PC-9 (cell line): ENCODE measurements at regions of chr7 and their contacts with region 1.

Region 1: GRCh38 chr7:83684894-83685293 is 36.0 kb upstream of the SEMA3E start:
- DNase-seq: peak; percentile 86 to 99
- H3K4me3 ChIP-seq: no peak overlapping the region; the same call in 1 of the 2 replicates
- H3K27ac ChIP-seq: peak overlapping the region; percentile 95
- H3K4me1 ChIP-seq: peaks cover 29% of the 10 kb centered on the region
- H3K27me3 ChIP-seq: no peaks in the 10 kb centered on the region
- CTCF ChIP-seq: no peak

Region 2: DNA sequence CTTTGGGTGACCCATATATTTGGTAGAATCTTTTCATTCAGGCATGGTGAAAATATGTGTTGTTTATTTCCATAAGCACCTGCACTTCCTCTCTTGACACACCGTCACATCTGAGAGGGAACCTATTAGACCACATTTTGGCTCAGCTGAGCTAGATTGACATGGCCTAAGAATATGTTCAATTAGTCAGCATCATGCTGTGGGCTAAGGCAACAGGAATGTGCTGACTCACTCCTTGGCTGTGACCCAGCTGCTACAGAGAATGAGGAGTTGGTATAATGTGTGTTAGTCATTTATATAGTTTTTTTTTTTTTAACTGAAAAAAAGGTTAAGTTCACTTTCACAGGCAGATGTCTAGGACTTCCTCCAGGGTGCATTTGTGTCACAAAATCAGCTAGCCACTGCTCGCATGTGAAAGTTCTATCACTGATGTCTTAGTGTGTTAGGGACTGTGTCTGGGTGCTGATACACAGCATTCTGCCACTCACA is 216.6 kb before region 1 on chr7:
- CTCF ChIA-PET with region 1: no interaction called
- POLR2A ChIA-PET with region 1: no interaction called
- intact Hi-C with region 1: loop called (anchors 1 kb)
- DNase-seq: peak; percentile 95 to 97
- H3K4me3 ChIP-seq: no peak overlapping the region
- H3K27ac ChIP-seq: peak overlapping the region; percentile 68
- H3K4me1 ChIP-seq: peaks cover 19% of the 10 kb centered on the region
- H3K27me3 ChIP-seq: no peaks in the 10 kb centered on the region
- CTCF ChIP-seq: peak; percentile 33; the same call in 1 of the 2 replicates

Region 3: GRCh38 chr7:83524286-83525075 is 160.4 kb before region 1 on chr7:
- CTCF ChIA-PET with region 1: no interaction called
- POLR2A ChIA-PET with region 1: no interaction called
- intact Hi-C with region 1: loop called (anchors 10 kb)
- DNase-seq: peak; percentile 34 to 80
- H3K4me3 ChIP-seq: no peak overlapping the region
- H3K27ac ChIP-seq: no peak overlapping the region
- H3K4me1 ChIP-seq: peaks cover 9% of the 10 kb centered on the region; the same call in 1 of the 2 replicates
- H3K27me3 ChIP-seq: no peaks in the 10 kb centered on the region
- CTCF ChIP-seq: no peak

Region 4: DNA sequence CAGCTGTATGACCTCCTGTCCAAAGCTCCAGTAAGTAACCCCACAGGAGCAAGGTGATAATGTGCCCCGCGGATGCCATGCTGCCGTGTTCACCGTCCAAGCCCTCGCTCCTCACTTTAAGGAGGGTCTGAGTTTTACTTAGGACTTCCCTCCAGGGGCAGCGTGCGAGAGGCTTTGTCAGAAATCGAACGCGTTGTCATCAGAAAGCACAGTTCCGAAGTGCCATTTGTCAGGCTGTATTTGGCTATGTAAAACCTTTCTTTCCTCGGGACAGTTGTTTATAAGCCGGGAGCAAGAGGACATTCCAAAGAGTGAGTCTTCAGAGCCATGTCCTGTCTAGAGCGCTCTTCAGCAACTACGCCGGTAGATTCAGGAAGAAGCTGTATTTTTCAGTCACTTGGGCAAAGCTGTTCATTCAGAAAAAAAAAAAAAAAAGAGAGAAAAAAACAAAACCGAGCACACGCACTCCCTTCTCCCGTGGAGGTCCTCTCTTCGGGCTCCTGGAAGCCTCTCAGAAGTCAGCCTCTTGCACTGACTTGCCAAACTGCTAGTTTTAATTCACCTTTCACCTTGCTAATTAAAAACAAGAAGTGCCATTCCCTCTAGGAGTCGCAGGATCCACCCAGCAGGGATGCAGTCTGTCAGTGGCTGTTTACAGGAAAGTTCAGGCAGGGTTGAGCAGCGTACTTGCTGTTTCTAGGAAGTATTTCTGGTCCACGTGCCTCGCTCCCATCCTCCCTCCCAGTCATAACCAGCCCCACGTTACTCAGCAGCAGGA is 36.2 kb before region 1 on chr7 and contains the start of gene SEMA3E:
- CTCF ChIA-PET with region 1: no interaction called
- POLR2A ChIA-PET with region 1: no interaction called
- intact Hi-C with region 1: no loop called
- DNase-seq: peak; percentile 35 to 62
- H3K4me3 ChIP-seq: peak within 1 kb of the TSS; percentile 71
- H3K27ac ChIP-seq: peak within 1 kb of the TSS; percentile 54
- H3K4me1 ChIP-seq: peaks cover 21% of the 10 kb centered on the region
- H3K27me3 ChIP-seq: no peaks in the 10 kb centered on the region
- CTCF ChIP-seq: 0 out of 2 replicates have a peak, but pooled peaks have one; percentile 24
- total RNA-seq, gene SEMA3E: 1.8 and 2.1 TPM in 2 replicates

Region 5: GRCh38 chr7:83704561-83704960 is 19.7 kb after region 1 on chr7:
- CTCF ChIA-PET with region 1: no interaction called
- POLR2A ChIA-PET with region 1: no interaction called
- intact Hi-C with region 1: loop called (anchors 1 kb)
- DNase-seq: peak; percentile 59 to 92
- H3K4me3 ChIP-seq: peak overlapping the region; percentile 28; the same call in 1 of the 2 replicates
- H3K27ac ChIP-seq: peak overlapping the region; percentile 85
- H3K4me1 ChIP-seq: peaks cover 28% of the 10 kb centered on the region
- H3K27me3 ChIP-seq: no peaks in the 10 kb centered on the region
- CTCF ChIP-seq: no peak

Region 6: GRCh38 chr7:83866582-83866981 is 181.7 kb after region 1 on chr7:
- CTCF ChIA-PET with region 1: interaction called, 19 read pairs
- POLR2A ChIA-PET with region 1: no interaction called
- intact Hi-C with region 1: no loop called
- DNase-seq: no peak
- H3K4me3 ChIP-seq: no peak overlapping the region
- H3K27ac ChIP-seq: no peak overlapping the region
- H3K4me1 ChIP-seq: no peaks in the 10 kb centered on the region
- H3K27me3 ChIP-seq: no peaks in the 10 kb centered on the region
- CTCF ChIP-seq: no peak